CD14-positive monocyte (primary cell): ENCODE measurements at regions of chr19 and their contacts with region 1.

Region 1: GRCh38 chr19:41872775-41873647 is 4.1 kb upstream of the CD79A start:
- DNase-seq: peak in 2 of 3 donors; percentile 53 to 54
- H3K4me3 ChIP-seq: no peak overlapping the region
- H3K4me3 Mint-ChIP-seq: peak overlapping the region in 1 of 2 donors; percentile 53
- H3K27ac ChIP-seq: no peak overlapping the region
- H3K27ac Mint-ChIP-seq: peak overlapping the region in 4 of 7 donors; percentile 25 to 50 (median 49)
- H3K4me1 ChIP-seq: peaks cover 75 to 82% of the 10 kb centered on the region in 2 donors
- H3K4me1 Mint-ChIP-seq: peaks cover 81% of the 10 kb centered on the region
- H3K27me3 ChIP-seq: no peaks in the 10 kb centered on the region
- H3K27me3 Mint-ChIP-seq: peaks cover 0 to 4% (median 0%) of the 10 kb centered on the region in 3 donors
- CTCF ChIP-seq: peak; percentile 77

Region 2: DNA sequence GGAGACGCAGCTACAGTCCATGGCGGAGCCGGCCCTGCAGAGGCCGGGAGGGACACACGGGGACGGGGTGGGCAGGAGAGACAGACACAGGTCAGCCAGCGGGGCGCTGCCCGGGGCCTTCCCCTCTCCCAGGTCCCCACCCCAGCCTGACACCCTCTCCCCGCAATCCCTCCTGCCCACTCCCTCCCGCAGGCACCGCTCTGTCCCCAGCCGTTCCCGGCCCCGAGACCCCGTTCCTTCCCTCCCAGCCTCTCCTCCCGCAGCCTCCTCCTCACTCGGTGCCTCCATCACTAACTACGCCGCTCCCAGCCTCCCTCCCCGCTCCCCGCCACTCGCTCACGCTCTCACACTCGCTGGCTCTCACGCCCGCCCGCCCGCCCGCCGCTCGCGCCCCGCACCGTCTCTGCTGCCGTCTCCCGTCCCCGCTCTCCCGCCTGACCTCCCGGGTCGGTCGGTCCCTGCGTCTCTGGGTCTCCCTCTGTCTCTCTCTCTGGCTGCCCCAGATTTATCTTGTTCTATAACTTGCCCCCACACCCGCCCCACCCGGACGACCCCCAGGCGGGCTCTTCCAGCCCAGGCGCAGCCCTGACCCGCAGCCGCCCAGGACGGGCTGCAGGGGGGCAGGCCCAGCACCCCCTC is 40.0 kb after region 1 on chr19:
- intact Hi-C with region 1: no loop called
- DNase-seq: no peak
- H3K4me3 ChIP-seq: no peak overlapping the region
- H3K4me3 Mint-ChIP-seq: peak overlapping the region in 1 of 2 donors; percentile 26
- H3K27ac ChIP-seq: no peak overlapping the region
- H3K27ac Mint-ChIP-seq: peak overlapping the region in 1 of 7 donors; percentile 58
- H3K4me1 ChIP-seq: no peaks in the 10 kb centered on the region
- H3K4me1 Mint-ChIP-seq: peaks cover 18% of the 10 kb centered on the region
- H3K27me3 ChIP-seq: peaks cover 29 to 67% of the 10 kb centered on the region in 2 donors
- H3K27me3 Mint-ChIP-seq: peaks cover 4 to 44% (median 43%) of the 10 kb centered on the region in 3 donors
- CTCF ChIP-seq: no peak

Region 3: DNA sequence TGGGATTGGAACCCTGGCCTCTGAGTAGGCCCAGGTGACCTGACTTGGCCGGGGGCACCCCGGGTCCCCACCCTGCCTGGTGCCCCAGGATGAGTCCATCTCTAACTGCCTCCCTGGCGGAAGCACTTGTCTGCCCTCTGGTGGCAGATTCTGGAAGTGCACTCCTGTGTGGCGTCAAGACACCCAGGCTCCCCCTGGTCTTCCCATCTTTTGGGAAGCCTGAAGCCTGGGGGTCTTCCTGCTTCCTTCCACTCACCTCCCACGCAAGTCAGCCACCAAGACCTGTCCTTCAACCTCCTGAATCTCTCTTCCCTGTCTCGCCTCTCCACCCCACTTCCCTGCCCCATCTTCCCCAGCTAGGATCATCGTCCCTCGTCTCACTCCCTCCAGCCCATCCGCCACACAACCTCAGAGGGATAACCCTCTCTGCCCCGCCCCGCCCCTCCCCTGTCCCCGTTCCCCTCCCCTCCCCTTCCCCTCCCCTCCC is 78.7 kb after region 1 on chr19:
- intact Hi-C with region 1: loop called in 1 of 2 experiments (anchors 5 kb)
- DNase-seq: peak; percentile 56 to 67 (median 62)
- H3K4me3 ChIP-seq: no peak overlapping the region
- H3K4me3 Mint-ChIP-seq: peak overlapping the region in 1 of 2 donors; percentile 37
- H3K27ac ChIP-seq: no peak overlapping the region
- H3K27ac Mint-ChIP-seq: peak overlapping the region in 1 of 7 donors; percentile 66
- H3K4me1 ChIP-seq: no peaks in the 10 kb centered on the region
- H3K4me1 Mint-ChIP-seq: peaks cover 2% of the 10 kb centered on the region
- H3K27me3 ChIP-seq: no peaks in the 10 kb centered on the region
- H3K27me3 Mint-ChIP-seq: peaks cover 0 to 5% (median 4%) of the 10 kb centered on the region in 3 donors
- CTCF ChIP-seq: peak; percentile 99